ENCODE measurements at regions of chr10 and their contacts with region 1.

Region 1: GRCh38 chr10:122374237-122374869 is at the start of gene PLEKHA1:
- DNase-seq: peak; percentile 98
- ATAC-seq: peak; percentile 92 to 96 (median 94)
- H3K4me3 ChIP-seq: peak within 1 kb of the TSS; percentile 85
- H3K27ac ChIP-seq: peak within 1 kb of the TSS; percentile 97
- H3K4me1 ChIP-seq: peaks cover 43% of the 10 kb centered on the region
- H3K27me3 ChIP-seq: no peaks in the 10 kb centered on the region
- CTCF ChIP-seq: no peak
- total RNA-seq, gene PLEKHA1: 41.2 to 64.9 (median 57.4) TPM

Region 2: GRCh38 chr10:122286867-122287266 is 87.5 kb before region 1 on chr10:
- intact Hi-C with region 1: loop called in 1 of 2 experiments (anchors 5 kb)
- DNase-seq: peak; percentile 81 to 89
- ATAC-seq: peak; percentile 95 to 96 (median 96)
- H3K4me3 ChIP-seq: no peak overlapping the region
- H3K27ac ChIP-seq: peak overlapping the region; percentile 77
- H3K4me1 ChIP-seq: peaks cover 34% of the 10 kb centered on the region
- H3K27me3 ChIP-seq: no peaks in the 10 kb centered on the region
- CTCF ChIP-seq: no peak

Region 3: DNA sequence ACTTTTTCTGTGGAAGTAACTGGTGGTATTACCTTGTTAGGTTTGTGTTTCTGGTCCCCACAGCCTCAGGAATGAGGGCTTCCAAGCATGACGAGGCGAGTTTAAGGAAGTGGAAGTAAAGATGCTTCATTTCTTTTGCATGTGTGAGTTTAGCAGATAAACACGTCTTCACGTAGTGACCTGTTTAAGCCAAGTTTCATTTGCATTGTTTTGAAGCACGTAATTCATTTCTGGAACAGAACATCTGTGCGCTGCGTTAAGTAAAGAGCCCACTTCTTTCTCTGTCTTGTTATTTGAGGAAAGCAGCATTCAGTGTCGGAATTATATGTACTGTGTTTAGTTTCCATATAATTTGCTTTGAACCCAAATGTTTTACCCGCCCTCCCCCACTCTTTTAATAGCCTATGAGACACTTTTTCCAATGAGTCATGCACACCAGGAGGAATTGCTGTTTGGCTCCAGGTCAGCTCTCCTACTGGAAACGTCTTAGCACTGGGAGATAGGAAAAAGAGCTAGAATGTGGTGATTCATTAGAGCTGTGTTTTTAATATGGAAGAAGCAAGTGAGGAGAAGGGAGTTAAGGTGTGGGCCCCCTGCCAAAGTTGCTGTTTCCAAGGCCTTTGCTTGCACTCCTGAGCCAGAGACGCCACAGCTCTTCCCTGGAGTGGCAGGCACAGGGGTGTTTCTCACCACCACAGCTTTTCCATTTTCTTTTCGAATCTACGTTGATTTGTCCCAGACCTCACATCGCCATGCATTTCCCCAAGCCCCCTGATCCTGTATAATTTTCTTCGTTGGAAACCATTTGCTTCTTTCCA is 66.5 kb before region 1 on chr10:
- intact Hi-C with region 1: loop called in 1 of 2 experiments (anchors 10 kb)
- DNase-seq: peak; percentile 72 to 74
- ATAC-seq: peak; percentile 85 to 94 (median 90)
- H3K4me3 ChIP-seq: peak overlapping the region; percentile 36
- H3K27ac ChIP-seq: peak overlapping the region; percentile 85
- H3K4me1 ChIP-seq: peaks cover 24% of the 10 kb centered on the region
- H3K27me3 ChIP-seq: no peaks in the 10 kb centered on the region
- CTCF ChIP-seq: no peak

Region 4: DNA sequence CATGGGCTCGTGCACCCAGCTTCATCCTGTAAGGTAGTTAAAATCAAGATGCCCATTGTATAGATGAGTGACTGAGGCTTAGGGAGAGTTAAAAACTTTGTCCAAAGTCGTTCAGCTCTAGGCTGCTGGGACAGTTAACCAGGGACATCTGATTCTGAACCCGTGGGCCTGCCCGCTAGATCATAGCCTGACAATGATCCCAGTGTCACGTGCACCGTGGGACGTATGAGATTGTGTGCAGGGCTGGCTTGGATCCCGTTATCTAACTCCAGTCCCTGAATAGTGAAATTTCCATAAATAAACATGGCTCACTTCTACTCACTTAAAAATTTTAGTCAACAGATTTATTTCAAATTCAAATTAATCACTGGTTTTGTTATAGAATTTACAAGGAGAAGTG is 300.4 kb after region 1 on chr10:
- intact Hi-C with region 1: no loop called
- DNase-seq: no peak
- ATAC-seq: no peak
- H3K4me3 ChIP-seq: no peak overlapping the region
- H3K27ac ChIP-seq: no peak overlapping the region
- H3K4me1 ChIP-seq: no peaks in the 10 kb centered on the region
- H3K27me3 ChIP-seq: peaks cover 0 to 17% (median 5%) of the 10 kb centered on the region in 3 donors
- CTCF ChIP-seq: no peak